Left ventricle myocardium inferior (tissue), 1 donor: ENCODE measurements at regions of chr1 and their contacts with region 1.

Region 1: GRCh38 chr1:236122176-236122575 is 20.2 kb upstream of the GPR137B start:
- DNase-seq: no peak
- H3K4me3 ChIP-seq: no peak overlapping the region
- H3K27ac ChIP-seq: no peak overlapping the region
- H3K4me1 ChIP-seq: no peaks in the 10 kb centered on the region
- H3K27me3 ChIP-seq: no peaks in the 10 kb centered on the region
- CTCF ChIP-seq: no peak

Region 2: GRCh38 chr1:235968831-235969230 is 153.3 kb before region 1 on chr1:
- intact Hi-C with region 1: no loop called
- DNase-seq: no peak
- H3K4me3 ChIP-seq: no peak overlapping the region
- H3K27ac ChIP-seq: no peak overlapping the region
- H3K4me1 ChIP-seq: peaks cover 23% of the 10 kb centered on the region
- H3K27me3 ChIP-seq: no peaks in the 10 kb centered on the region
- CTCF ChIP-seq: no peak

Region 3: DNA sequence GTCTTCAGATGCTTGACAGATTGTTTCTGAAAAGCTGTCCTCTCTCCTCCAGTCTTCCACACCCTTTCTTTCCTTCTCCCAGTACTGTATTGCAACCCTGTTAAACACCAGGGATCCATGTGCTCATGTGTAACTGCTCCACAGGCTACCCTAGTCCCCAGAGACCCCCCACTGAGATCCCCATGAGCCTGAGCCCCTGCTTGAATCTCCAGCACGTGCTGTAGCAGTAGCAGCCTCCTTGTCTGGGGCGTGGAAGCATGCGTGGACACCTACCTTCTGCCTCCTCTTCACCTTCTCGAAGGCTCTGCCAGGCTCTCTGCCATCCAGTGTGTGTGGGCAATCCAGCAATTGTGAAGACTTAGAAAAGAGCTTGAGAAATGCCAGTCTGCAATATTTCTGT is 45.4 kb after region 1 on chr1:
- intact Hi-C with region 1: loop called (anchors 2 kb)
- DNase-seq: no peak
- H3K4me3 ChIP-seq: no peak overlapping the region
- H3K27ac ChIP-seq: no peak overlapping the region
- H3K4me1 ChIP-seq: peaks cover 24% of the 10 kb centered on the region
- H3K27me3 ChIP-seq: no peaks in the 10 kb centered on the region
- CTCF ChIP-seq: no peak